Left cardiac atrium (tissue), 4 donors: ENCODE measurements at regions of chr3 and their contacts with region 1.

Region 1: GRCh38 chr3:108528459-108529252 is 18.3 kb upstream of the MYH15 start:
- DNase-seq: no peak
- ATAC-seq: peak; percentile 65 to 86

Region 2: DNA sequence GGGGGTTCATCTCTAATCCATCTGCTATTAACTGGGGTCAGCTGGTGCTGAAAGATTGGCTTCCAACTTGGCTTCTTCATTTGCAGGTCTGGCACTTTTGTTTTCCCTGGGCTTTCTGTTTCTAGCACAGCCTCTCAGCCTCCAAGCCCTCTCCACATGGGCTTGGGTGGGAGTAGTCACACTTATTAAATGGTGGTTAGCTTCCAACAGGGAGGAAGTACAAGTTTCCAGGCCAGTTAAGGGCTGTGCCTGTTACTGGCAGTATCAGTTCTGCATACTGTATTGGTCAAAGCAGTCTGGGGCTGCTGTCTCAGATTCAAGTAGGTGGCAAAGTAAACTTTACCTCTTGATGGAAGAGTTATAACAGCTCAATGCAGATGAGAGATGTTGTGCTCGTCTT is 1778.6 kb before region 1 on chr3:
- intact Hi-C with region 1: no loop called
- DNase-seq: no peak
- ATAC-seq: no peak

Region 3: DNA sequence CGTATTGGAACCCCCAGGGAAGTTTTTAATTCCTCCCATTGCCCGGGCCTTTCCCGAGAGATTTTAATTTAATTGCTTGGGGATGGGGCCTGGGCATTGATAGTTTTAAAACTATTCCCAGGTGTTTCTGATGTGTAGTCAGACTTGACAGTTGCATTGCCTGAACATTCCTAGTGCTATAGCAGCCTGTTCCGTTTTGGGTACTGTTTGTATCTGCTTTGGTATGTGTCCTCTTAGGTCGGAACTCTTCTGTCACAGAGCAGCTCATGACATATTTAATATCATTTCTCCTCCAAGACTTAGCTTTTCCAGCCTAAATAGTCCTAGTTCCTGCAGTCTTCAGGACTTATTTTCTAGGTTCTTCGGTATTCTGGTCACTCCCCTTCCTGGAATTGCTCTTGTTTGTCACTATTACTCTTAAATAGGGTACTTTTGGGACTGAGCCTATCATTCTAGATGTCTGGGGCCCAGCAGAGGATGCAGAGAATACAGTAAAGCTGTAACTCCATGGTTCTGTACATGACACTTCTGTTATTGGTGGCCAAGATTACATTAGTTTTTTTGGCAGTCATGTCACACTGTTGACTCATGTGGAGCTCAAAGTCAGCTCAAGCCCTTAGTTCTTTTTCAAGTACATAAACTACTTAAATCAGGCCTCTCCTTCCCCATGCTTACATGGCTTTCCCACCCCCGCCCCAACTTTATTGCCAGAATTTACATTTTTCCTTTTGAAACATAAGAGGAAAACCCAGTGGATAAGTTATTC is 924.4 kb before region 1 on chr3:
- intact Hi-C with region 1: loop called in 1 of 2 experiments (anchors 5 kb)
- DNase-seq: no peak
- ATAC-seq: peak; percentile 75 to 87

Region 4: DNA sequence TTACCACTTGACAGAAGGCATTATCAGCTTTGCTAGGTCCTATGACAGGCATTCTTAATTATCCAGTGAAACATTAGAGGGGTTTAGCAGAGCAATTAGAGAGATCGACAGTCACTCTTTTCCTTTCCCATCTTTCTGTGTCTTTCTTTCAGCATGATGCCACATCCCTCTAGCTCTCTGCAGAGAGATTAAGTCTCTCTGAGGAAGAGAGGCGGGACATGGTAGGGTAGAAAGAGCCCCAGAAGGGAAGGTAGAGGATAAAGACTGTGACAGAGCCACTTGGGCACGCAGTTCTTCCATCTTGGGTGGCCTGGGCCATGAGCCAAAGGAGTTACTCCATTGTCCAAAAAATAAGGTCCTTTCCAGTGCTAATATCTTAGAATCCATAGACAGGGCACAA is 176.5 kb before region 1 on chr3:
- intact Hi-C with region 1: no loop called
- DNase-seq: no peak
- ATAC-seq: no peak